ENCODE measurements at regions of chr12 and their contacts with region 1.

Region 1: GRCh38 chr12:6376079-6376869 is 911 bp upstream of the SCNN1A start:
- DNase-seq: peak; percentile 87 to 97
- H3K4me3 ChIP-seq: peak overlapping the region; percentile 62
- H3K27ac ChIP-seq: peak overlapping the region; percentile 89
- H3K4me1 ChIP-seq: peaks cover 41% of the 10 kb centered on the region
- H3K27me3 ChIP-seq: no peaks in the 10 kb centered on the region
- CTCF ChIP-seq: peak; percentile 53; the same call in 1 of the 2 replicates

Region 2: GRCh38 chr12:6215932-6216494 is 160.3 kb before region 1 on chr12:
- CTCF ChIA-PET with region 1: no interaction called
- POLR2A ChIA-PET with region 1: interaction called, 6 read pairs
- intact Hi-C with region 1: loop called (anchors 2 kb)
- DNase-seq: peak; percentile 99 to 100
- H3K4me3 ChIP-seq: peak overlapping the region; percentile 32; the same call in 1 of the 2 replicates
- H3K27ac ChIP-seq: peak overlapping the region; percentile 95
- H3K4me1 ChIP-seq: peaks cover 86% of the 10 kb centered on the region
- H3K27me3 ChIP-seq: no peaks in the 10 kb centered on the region
- CTCF ChIP-seq: no peak

Region 3: GRCh38 chr12:6335451-6336078 is 40.7 kb before region 1 on chr12:
- CTCF ChIA-PET with region 1: interaction called, 10 read pairs
- POLR2A ChIA-PET with region 1: interaction called, 42 read pairs
- intact Hi-C with region 1: loop called (anchors 1 kb)
- DNase-seq: peak; percentile 76
- H3K4me3 ChIP-seq: peak overlapping the region; percentile 49
- H3K27ac ChIP-seq: peak overlapping the region; percentile 95
- H3K4me1 ChIP-seq: peaks cover 82% of the 10 kb centered on the region
- H3K27me3 ChIP-seq: no peaks in the 10 kb centered on the region
- CTCF ChIP-seq: peak; percentile 53; the same call in 1 of the 2 replicates

Region 4: GRCh38 chr12:6390084-6390799 is 14.0 kb after region 1 on chr12:
- CTCF ChIA-PET with region 1: no interaction called
- POLR2A ChIA-PET with region 1: interaction called, 16 read pairs
- intact Hi-C with region 1: no loop called
- DNase-seq: no peak
- H3K4me3 ChIP-seq: no peak overlapping the region
- H3K27ac ChIP-seq: no peak overlapping the region
- H3K4me1 ChIP-seq: peaks cover 17% of the 10 kb centered on the region
- H3K27me3 ChIP-seq: no peaks in the 10 kb centered on the region
- CTCF ChIP-seq: no peak

Region 5: GRCh38 chr12:6451348-6452244 is 75.3 kb after region 1 on chr12 and contains the start of gene TAPBPL:
- CTCF ChIA-PET with region 1: no interaction called
- POLR2A ChIA-PET with region 1: no interaction called
- intact Hi-C with region 1: loop called (anchors 1 kb)
- DNase-seq: peak; percentile 70 to 85
- H3K4me3 ChIP-seq: peak within 1 kb of the TSS; percentile 63
- H3K27ac ChIP-seq: peak within 1 kb of the TSS; percentile 52
- H3K4me1 ChIP-seq: peaks cover 13% of the 10 kb centered on the region
- H3K27me3 ChIP-seq: no peaks in the 10 kb centered on the region
- CTCF ChIP-seq: no peak
- total RNA-seq, gene TAPBPL: 26.0 and 27.8 TPM in 2 replicates

Region 6: DNA sequence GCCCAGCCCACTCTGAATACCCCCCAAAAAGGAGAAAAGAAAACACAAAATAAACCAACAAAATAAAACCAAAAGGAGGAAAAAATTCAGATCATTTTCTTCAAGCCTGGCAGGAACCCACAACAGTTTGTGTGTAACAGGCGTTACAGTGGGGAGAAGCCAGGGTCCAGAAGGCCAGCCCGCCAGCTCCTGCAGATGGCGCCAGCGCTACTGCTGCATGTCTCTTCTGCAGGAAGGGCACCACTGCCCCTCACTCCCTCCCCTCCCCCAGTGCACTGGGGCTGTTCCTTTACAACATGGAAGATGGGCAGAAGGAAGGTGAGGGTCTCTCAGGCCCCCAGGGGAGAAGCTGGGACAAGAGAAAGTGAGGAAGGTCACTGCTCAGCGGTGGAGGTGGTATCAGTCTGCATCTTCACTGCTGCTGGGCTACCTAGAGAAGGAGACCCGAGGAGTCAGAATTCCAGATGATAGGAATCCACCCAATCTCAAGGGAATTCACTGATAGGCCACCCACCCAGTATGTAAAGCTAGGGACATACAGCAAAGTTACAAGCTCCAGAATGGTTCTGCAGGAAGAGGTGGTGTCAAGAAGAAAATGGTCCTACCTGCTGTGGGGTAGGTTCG is 194.1 kb after region 1 on chr12:
- CTCF ChIA-PET with region 1: no interaction called
- POLR2A ChIA-PET with region 1: interaction called, 17 read pairs
- intact Hi-C with region 1: no loop called
- DNase-seq: peak; percentile 35 to 62
- H3K4me3 ChIP-seq: no peak overlapping the region
- H3K27ac ChIP-seq: no peak overlapping the region
- H3K4me1 ChIP-seq: peaks cover 16% of the 10 kb centered on the region
- H3K27me3 ChIP-seq: no peaks in the 10 kb centered on the region
- CTCF ChIP-seq: peak; percentile 58; the same call in 1 of the 2 replicates

Measured in PC-9 (cell line).